GM12878 (cell line): ENCODE measurements at regions of chr5 and their contacts with region 1.

Region 1: GRCh38 chr5:110409571-110409970 is 316.9 kb downstream of the TMEM232 start:
- DNase-seq: no peak
- ATAC-seq: no peak
- H3K4me3 ChIP-seq: no peak overlapping the region
- H3K27ac ChIP-seq: no peak overlapping the region
- H3K4me1 ChIP-seq: no peaks in the 10 kb centered on the region
- H3K27me3 ChIP-seq: no peaks in the 10 kb centered on the region
- CTCF ChIP-seq: no peak
- EP300 ChIP-seq: no peak
- POLR2A ChIP-seq: no peak
- RAD21 ChIP-seq: no peak

Region 2: GRCh38 chr5:110342683-110343082 is 66.9 kb before region 1 on chr5:
- CTCF ChIA-PET with region 1: no interaction called
- POLR2A ChIA-PET with region 1: no interaction called
- RAD21 ChIA-PET with region 1: no interaction called
- SMC1A ChIA-PET with region 1: no interaction called
- in situ Hi-C with region 1: no loop called
- intact Hi-C with region 1: loop called (anchors 5 kb)
- DNase-seq: no peak
- ATAC-seq: no peak
- H3K4me3 ChIP-seq: no peak overlapping the region
- H3K27ac ChIP-seq: no peak overlapping the region
- H3K4me1 ChIP-seq: no peaks in the 10 kb centered on the region
- H3K27me3 ChIP-seq: no peaks in the 10 kb centered on the region
- CTCF ChIP-seq: no peak
- EP300 ChIP-seq: no peak
- POLR2A ChIP-seq: no peak
- RAD21 ChIP-seq: no peak